ENCODE measurements at regions of chr11 and their contacts with region 1.

Region 1: GRCh38 chr11:72040726-72041441 is 39.5 kb downstream of the NUMA1 start:
- DNase-seq: peak; percentile 60 to 91 (median 82)
- ATAC-seq: peak; percentile 78
- H3K4me3 ChIP-seq: peak overlapping the region; percentile 75
- H3K4me3 Mint-ChIP-seq: no peak overlapping the region
- H3K27ac ChIP-seq: peak overlapping the region; percentile 91 to 95
- H3K27ac Mint-ChIP-seq: no peak overlapping the region
- H3K4me1 ChIP-seq: peaks cover 64% of the 10 kb centered on the region
- H3K4me1 Mint-ChIP-seq: peaks cover 46% of the 10 kb centered on the region
- H3K27me3 ChIP-seq: no peaks in the 10 kb centered on the region
- H3K27me3 Mint-ChIP-seq: no peaks in the 10 kb centered on the region
- CTCF ChIP-seq: no peak

Region 2: GRCh38 chr11:71998662-71999310 is 42.1 kb before region 1 on chr11 and contains the start of gene IL18BP:
- CTCF ChIA-PET with region 1: no interaction called
- POLR2A ChIA-PET with region 1: interaction called, 15 read pairs
- intact Hi-C with region 1: no loop called
- DNase-seq: peak in 12 of 14 experiments; percentile 15 to 76 (median 29)
- ATAC-seq: peak; percentile 91
- H3K4me3 ChIP-seq: peak within 1 kb of the TSS; percentile 56
- H3K4me3 Mint-ChIP-seq: peak within 1 kb of the TSS; percentile 91
- H3K27ac ChIP-seq: peak within 1 kb of the TSS; percentile 65 to 85
- H3K27ac Mint-ChIP-seq: peak within 1 kb of the TSS; percentile 96
- H3K4me1 ChIP-seq: peaks cover 34% of the 10 kb centered on the region
- H3K4me1 Mint-ChIP-seq: peaks cover 39% of the 10 kb centered on the region
- H3K27me3 ChIP-seq: no peaks in the 10 kb centered on the region
- H3K27me3 Mint-ChIP-seq: no peaks in the 10 kb centered on the region
- CTCF ChIP-seq: no peak
- total RNA-seq, gene IL18BP: 14.7 to 16.8 TPM

Region 3: DNA sequence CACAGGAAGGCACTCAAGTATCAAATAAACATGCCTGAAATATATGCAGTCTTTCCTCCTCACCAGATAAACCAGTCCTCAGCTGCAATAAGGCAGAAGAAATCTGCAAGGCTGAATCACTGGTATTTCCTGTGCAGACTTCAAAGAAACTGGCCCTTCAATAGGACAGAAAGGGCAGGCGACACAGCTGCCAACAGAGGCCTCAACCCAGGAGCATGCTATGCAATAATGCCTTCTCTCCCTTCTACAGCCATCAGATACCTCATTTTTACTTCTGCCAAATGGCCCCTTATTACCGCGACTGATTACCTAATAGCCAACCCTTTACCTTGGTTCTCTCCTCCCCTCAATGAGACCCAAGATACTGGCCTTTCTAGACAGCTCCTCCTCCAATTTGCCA is 31.5 kb after region 1 on chr11:
- CTCF ChIA-PET with region 1: interaction called, 5 read pairs
- POLR2A ChIA-PET with region 1: interaction called, 12 read pairs
- intact Hi-C with region 1: no loop called
- DNase-seq: peak in 1 of 14 experiments; percentile 25
- ATAC-seq: no peak
- H3K4me3 ChIP-seq: no peak overlapping the region
- H3K4me3 Mint-ChIP-seq: no peak overlapping the region
- H3K27ac ChIP-seq: no peak overlapping the region
- H3K27ac Mint-ChIP-seq: no peak overlapping the region
- H3K4me1 ChIP-seq: peaks cover 18% of the 10 kb centered on the region
- H3K4me1 Mint-ChIP-seq: peaks cover 37% of the 10 kb centered on the region
- H3K27me3 ChIP-seq: no peaks in the 10 kb centered on the region
- H3K27me3 Mint-ChIP-seq: no peaks in the 10 kb centered on the region
- CTCF ChIP-seq: no peak

Region 4: DNA sequence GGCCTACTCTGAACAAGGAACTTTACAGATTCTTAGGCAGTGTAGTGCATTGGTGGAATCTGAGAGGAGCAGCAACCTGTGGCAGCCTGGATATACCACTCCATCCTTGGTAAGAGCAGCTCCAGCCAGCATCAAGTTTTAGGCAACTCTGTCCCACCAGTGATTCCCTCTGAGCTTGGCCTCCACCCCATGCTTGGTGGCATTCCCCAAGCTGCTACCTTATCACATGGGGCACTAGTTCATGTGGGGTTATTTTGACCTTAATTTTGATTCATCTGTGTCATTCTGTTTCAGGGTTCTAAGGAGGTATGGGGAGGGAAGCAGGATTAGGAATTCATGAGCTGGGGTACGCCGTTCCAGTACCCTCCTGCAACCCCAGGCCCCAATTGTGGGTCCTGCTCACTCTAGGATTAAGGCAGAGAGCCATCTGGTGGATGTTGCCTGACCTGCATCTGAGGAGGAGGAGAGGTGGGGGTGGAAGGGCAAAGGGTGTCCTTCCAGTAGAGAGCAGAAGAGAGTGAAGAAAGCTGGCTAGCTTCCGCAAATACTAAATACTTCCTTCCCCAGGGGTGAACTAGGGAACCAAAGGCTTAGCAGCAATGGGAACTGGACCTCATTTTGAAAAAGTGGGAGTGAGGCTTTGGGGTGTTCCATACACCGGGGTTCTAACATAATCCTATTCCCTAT is 50.3 kb after region 1 on chr11:
- CTCF ChIA-PET with region 1: interaction called, 24 read pairs
- POLR2A ChIA-PET with region 1: interaction called, 22 read pairs
- intact Hi-C with region 1: no loop called
- DNase-seq: peak; percentile 56 to 85 (median 72)
- ATAC-seq: peak; percentile 100
- H3K4me3 ChIP-seq: no peak overlapping the region
- H3K4me3 Mint-ChIP-seq: no peak overlapping the region
- H3K27ac ChIP-seq: no peak overlapping the region
- H3K27ac Mint-ChIP-seq: peak overlapping the region; percentile 73
- H3K4me1 ChIP-seq: peaks cover 5% of the 10 kb centered on the region
- H3K4me1 Mint-ChIP-seq: peaks cover 14% of the 10 kb centered on the region
- H3K27me3 ChIP-seq: no peaks in the 10 kb centered on the region
- H3K27me3 Mint-ChIP-seq: no peaks in the 10 kb centered on the region
- CTCF ChIP-seq: peak; percentile 86

Region 5: GRCh38 chr11:72222907-72223614 is 182.2 kb after region 1 on chr11:
- CTCF ChIA-PET with region 1: no interaction called
- POLR2A ChIA-PET with region 1: interaction called, 17 read pairs
- intact Hi-C with region 1: loop called in 1 of 2 experiments (anchors 2 kb)
- DNase-seq: peak; percentile 83 to 97 (median 94)
- ATAC-seq: peak; percentile 76
- H3K4me3 ChIP-seq: peak overlapping the region; percentile 91
- H3K4me3 Mint-ChIP-seq: peak overlapping the region; percentile 98
- H3K27ac ChIP-seq: peak overlapping the region; percentile 71 to 75
- H3K27ac Mint-ChIP-seq: peak overlapping the region; percentile 95
- H3K4me1 ChIP-seq: peaks cover 35% of the 10 kb centered on the region
- H3K4me1 Mint-ChIP-seq: peaks cover 32% of the 10 kb centered on the region
- H3K27me3 ChIP-seq: no peaks in the 10 kb centered on the region
- H3K27me3 Mint-ChIP-seq: no peaks in the 10 kb centered on the region
- CTCF ChIP-seq: peak; percentile 22